ENCODE measurements at regions of chr2 and their contacts with region 1.

Region 1: DNA sequence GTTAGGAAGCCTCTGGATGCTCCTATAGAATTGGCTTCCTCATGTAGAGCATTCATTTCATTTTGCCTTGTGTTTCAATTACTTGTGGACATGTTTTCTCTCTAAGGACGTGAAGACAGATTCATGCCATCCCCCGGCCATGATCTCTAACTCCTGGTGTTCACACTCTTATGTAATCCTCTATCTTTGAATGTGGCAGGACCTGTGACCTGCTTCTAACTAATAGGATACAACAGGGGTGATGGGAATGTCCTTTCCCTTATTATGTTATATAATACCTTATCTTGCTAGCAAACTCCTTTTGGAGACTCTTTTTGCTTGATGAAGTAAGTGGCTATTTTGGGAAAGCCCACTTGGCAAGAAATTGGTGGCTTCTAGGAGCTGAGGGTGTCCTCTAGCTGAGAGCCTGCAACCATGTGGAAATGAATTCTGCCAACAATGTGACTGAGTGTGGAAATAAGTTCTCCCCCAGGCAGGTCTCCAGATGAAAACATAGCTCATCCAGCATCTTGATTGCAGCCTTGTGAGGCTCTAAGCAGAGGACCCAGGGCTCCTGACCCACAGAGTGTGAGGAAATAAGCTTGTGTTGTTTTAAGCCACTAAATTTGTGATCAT is 13.8 kb downstream of the DPYSL5 start:
- DNase-seq: no peak
- H3K4me3 ChIP-seq: no peak overlapping the region
- H3K27ac ChIP-seq: no peak overlapping the region
- H3K4me1 ChIP-seq: no peaks in the 10 kb centered on the region
- H3K27me3 ChIP-seq: peaks cover 80% of the 10 kb centered on the region
- CTCF ChIP-seq: no peak

Region 2: DNA sequence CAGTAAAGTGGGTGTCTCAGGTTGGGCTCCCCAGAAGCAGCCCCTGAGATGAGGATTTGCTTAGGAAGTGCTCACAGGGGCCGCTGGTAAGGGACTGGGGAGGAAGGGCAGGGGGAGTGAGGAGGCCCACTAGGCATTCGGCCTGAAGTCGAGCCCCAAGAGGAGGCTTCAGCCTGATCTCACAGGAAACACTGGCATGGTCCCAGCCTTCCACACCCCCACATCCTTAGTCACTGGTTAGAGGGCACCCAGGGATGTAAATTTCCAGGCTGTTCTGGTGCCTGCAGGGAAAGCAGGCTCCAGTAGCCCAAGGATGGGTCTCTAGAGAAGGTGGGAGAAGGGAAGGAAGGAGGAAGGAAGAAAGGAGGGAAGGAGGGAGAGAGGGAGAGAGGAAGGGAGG is 191.5 kb before region 1 on chr2:
- CTCF ChIA-PET with region 1: no interaction called
- POLR2A ChIA-PET with region 1: no interaction called
- intact Hi-C with region 1: no loop called
- DNase-seq: no peak
- H3K4me3 ChIP-seq: no peak overlapping the region
- H3K27ac ChIP-seq: no peak overlapping the region
- H3K4me1 ChIP-seq: peaks cover 25% of the 10 kb centered on the region
- H3K27me3 ChIP-seq: no peaks in the 10 kb centered on the region; the same call in 1 of the 2 replicates
- CTCF ChIP-seq: no peak

Region 3: DNA sequence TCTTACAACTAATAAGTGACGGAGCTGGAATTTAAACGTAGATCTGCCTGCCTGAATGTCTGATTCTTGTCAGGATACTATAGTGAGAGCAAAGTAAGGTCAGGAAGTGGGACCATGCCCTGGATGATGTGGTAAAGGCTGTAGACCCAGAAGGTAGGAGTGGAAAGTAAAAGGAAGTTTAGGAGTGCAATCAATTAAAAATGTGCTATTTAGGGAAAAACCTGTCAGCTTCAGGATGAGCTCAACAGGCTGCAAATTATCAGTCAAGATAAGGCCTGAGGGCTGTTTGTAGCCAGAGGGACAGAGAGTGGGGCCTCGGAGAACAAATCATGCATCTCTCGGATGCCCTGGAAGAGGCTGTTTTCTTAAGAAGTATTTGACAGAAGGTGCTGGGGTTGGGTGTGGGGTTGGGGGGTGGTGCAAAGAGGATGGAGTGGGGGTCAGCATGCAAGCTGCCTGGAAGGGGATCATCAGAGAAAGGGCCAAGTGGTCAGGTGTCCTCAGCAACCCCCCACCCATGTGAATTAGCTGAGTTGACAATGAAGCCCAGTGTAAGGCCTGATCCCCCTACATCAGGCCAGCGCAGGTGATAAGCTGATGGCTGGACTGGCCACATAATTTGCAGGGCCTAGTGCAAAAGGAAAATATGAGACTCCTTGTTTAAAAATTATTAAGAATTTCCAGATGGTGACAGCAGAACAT is 55.6 kb after region 1 on chr2:
- CTCF ChIA-PET with region 1: interaction called, 19 read pairs
- POLR2A ChIA-PET with region 1: no interaction called
- intact Hi-C with region 1: no loop called
- DNase-seq: no peak
- H3K4me3 ChIP-seq: no peak overlapping the region
- H3K27ac ChIP-seq: no peak overlapping the region
- H3K4me1 ChIP-seq: no peaks in the 10 kb centered on the region
- H3K27me3 ChIP-seq: peaks cover 56% of the 10 kb centered on the region
- CTCF ChIP-seq: no peak